GM23248 (cell line): ENCODE measurements at regions of chr10 and their contacts with region 1.

Region 1: DNA sequence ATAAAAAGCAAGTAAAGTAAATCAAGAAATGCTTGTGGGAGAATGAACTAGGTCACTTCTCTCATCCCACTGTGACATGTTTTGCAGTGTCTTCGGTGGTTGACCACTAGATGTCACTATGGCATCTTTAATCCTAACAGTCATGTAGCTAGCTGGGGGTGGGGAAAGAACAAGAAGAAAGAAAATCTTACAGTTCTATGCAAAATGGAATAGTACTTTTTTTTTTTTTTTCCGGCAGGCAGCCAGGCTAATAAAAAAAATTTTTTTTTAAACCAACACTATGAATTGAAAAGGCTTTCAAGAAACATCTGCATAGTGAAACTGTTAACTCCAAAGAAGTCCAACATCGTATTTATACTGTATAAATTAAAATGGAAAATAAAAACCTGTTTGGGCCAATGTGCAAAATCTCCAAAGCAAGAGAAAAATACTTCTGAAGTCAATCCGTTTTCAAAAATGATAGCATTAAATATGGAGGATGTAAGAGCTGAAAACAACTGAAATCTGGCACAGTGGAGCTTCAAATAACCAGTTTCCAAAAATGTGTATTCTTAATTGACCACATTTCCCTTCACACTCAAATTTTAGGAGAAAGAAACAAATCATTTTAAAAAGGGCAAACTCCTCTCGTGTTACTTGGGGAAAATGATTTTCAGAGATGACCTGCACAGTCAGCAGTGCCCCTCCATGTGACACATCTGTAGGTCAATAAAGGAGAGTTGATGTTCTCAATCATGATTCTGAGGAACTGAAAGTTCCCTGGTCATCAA is 38.5 kb downstream of the CDK1 start:
- DNase-seq: peak; percentile 93
- H3K4me3 ChIP-seq: no peak overlapping the region
- H3K27ac ChIP-seq: no peak overlapping the region
- H3K4me1 ChIP-seq: peaks cover 43% of the 10 kb centered on the region
- H3K27me3 ChIP-seq: no peaks in the 10 kb centered on the region

Region 2: GRCh38 chr10:60964257-60965235 is 147.7 kb after region 1 on chr10:
- in situ Hi-C with region 1: loop called (anchors 10 kb)
- DNase-seq: peak; percentile 90
- H3K4me3 ChIP-seq: peak overlapping the region; percentile 44
- H3K27ac ChIP-seq: peak overlapping the region; percentile 85
- H3K4me1 ChIP-seq: peaks cover 29% of the 10 kb centered on the region
- H3K27me3 ChIP-seq: no peaks in the 10 kb centered on the region

Region 3: DNA sequence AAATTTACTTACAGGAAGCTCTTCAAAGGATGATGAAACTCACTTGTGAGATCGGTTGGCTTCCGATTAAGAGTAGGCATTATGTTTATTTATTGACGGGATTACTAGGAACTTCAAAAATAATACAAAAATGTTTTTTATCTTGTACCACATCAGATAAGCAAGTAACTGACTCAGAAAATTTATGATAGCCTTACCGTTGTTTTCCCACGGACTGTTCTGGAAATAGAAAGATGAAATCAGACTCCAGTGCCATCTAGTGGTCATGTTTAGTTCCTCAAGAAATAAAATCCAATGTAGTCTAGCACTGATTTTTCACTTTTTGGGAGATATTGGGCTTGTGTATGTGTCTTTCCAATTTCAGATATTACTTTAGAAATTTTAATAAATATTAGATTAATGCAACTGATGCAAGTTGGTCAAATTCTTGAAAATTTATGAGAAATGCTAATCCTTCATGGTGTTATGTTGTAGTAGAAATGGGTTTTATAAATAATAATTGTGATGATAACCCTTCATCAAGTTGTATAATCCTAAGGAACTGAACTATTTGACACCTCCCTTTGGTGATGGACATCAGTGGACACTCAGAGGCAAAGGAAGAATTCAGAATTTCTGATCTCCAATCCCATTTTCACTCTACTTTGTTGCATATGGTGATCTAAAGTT is 467.5 kb after region 1 on chr10:
- in situ Hi-C with region 1: loop called (anchors 10 kb)
- DNase-seq: peak; percentile 82
- H3K4me3 ChIP-seq: peak overlapping the region; percentile 60
- H3K27ac ChIP-seq: peak overlapping the region; percentile 16; the same call in 1 of the 2 replicates
- H3K4me1 ChIP-seq: peaks cover 6% of the 10 kb centered on the region
- H3K27me3 ChIP-seq: no peaks in the 10 kb centered on the region

Region 4: DNA sequence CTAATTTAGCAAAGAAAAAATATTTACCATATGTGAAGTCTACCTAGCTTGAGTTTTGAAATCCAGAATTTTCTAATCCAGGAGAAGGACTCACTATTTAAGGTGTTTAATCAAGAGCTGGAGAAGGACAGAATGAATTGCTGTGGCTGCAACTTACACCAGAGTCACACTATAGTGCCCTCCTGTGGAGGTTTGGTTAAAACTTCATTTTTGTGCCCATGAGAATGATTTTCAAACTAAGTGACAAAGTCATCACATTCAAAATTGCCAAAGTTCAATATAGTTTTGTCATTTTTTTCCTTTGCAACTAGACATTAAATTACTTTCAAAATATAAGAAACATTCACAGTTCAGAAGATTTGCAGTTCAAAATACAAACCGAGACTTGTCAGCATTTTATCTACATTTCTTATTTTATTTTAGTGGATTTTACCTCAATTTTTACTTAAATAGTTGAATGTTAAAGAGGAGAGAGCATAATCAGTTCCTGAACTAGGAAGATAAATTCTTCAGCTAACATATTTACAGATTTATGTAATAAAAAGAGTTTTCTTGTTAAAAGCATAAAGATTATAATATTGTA is 916.6 kb after region 1 on chr10:
- in situ Hi-C with region 1: loop called (anchors 25 kb)
- DNase-seq: peak; percentile 71
- H3K4me3 ChIP-seq: no peak overlapping the region
- H3K27ac ChIP-seq: no peak overlapping the region
- H3K4me1 ChIP-seq: no peaks in the 10 kb centered on the region
- H3K27me3 ChIP-seq: no peaks in the 10 kb centered on the region